Activated naive CD4-positive, alpha-beta T cell treated with anti-CD3 and anti-CD28 coated beads for 36 hours (primary cell): ENCODE measurements at regions of chr1 and their contacts with region 1.

Region 1: GRCh38 chr1:192516776-192517297 is 58.7 kb upstream of the RGS1 start:
- DNase-seq: peak; percentile 76
- H3K4me3 Mint-ChIP-seq: peak overlapping the region; percentile 66
- H3K27ac Mint-ChIP-seq: peak overlapping the region; percentile 79
- H3K4me1 Mint-ChIP-seq: peaks cover 53% of the 10 kb centered on the region
- H3K27me3 Mint-ChIP-seq: no peaks in the 10 kb centered on the region

Region 2: GRCh38 chr1:192407206-192407605 is 109.6 kb before region 1 on chr1:
- CTCF ChIA-PET with region 1: no interaction called
- intact Hi-C with region 1: no loop called
- DNase-seq: no peak
- H3K4me3 Mint-ChIP-seq: no peak overlapping the region
- H3K27ac Mint-ChIP-seq: no peak overlapping the region
- H3K4me1 Mint-ChIP-seq: no peaks in the 10 kb centered on the region
- H3K27me3 Mint-ChIP-seq: no peaks in the 10 kb centered on the region

Region 3: DNA sequence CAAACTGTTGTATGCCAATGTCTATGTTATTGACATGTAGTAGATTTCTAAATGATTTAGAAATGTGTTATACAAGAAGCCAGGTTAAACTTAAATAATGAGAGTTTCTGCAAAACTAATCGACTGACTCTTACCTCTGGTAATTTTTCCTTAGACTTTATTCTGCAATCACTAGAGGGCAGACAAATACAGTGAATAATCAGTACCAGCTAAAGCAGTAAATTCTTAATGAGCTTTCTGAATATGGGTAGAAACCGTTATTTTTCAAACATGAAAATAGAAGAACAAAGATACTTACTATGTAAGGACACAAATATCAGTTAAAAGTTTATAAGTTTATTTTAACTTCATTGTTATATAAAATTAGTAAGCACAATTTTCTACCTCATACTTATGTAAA is 39.2 kb before region 1 on chr1:
- CTCF ChIA-PET with region 1: interaction called, 4 read pairs
- intact Hi-C with region 1: loop called (anchors 5 kb)
- DNase-seq: no peak
- H3K4me3 Mint-ChIP-seq: no peak overlapping the region
- H3K27ac Mint-ChIP-seq: no peak overlapping the region
- H3K4me1 Mint-ChIP-seq: no peaks in the 10 kb centered on the region
- H3K27me3 Mint-ChIP-seq: no peaks in the 10 kb centered on the region

Region 4: DNA sequence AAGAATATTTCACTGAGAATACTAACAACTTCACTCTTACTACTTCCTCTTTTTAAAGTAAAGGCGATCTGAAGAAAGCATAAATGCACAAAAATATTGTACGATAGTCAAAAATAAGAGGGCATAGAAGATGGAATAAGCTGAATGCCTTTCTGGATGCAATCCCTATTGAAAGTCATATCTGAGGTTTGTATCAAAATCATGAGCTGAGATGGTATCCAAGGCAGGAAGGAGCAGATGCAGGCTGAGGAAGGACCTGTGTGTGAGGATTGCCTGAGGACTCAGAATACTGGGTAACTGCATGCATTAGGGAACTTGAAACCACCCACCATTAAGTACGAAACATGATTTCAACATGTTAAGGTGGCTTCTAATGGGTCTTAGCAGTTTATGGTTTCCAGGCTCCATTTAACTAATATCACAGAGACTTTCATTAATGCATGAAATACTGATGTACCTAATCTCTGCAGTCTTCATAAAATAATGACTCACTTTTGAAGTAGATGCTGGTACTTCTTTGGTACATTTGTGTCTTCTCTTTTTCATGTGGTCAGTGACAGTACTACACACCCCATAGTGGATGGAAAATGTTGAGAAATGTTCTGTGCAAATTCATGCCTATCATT is 29.2 kb after region 1 on chr1:
- CTCF ChIA-PET with region 1: no interaction called
- intact Hi-C with region 1: loop called (anchors 1 kb)
- DNase-seq: no peak
- H3K4me3 Mint-ChIP-seq: no peak overlapping the region
- H3K27ac Mint-ChIP-seq: no peak overlapping the region
- H3K4me1 Mint-ChIP-seq: peaks cover 33% of the 10 kb centered on the region
- H3K27me3 Mint-ChIP-seq: no peaks in the 10 kb centered on the region

Region 5: GRCh38 chr1:192601567-192601966 is 84.7 kb after region 1 on chr1:
- CTCF ChIA-PET with region 1: no interaction called
- intact Hi-C with region 1: loop called (anchors 1 kb)
- DNase-seq: no peak
- H3K4me3 Mint-ChIP-seq: no peak overlapping the region
- H3K27ac Mint-ChIP-seq: no peak overlapping the region
- H3K4me1 Mint-ChIP-seq: peaks cover 26% of the 10 kb centered on the region
- H3K27me3 Mint-ChIP-seq: no peaks in the 10 kb centered on the region

Region 6: DNA sequence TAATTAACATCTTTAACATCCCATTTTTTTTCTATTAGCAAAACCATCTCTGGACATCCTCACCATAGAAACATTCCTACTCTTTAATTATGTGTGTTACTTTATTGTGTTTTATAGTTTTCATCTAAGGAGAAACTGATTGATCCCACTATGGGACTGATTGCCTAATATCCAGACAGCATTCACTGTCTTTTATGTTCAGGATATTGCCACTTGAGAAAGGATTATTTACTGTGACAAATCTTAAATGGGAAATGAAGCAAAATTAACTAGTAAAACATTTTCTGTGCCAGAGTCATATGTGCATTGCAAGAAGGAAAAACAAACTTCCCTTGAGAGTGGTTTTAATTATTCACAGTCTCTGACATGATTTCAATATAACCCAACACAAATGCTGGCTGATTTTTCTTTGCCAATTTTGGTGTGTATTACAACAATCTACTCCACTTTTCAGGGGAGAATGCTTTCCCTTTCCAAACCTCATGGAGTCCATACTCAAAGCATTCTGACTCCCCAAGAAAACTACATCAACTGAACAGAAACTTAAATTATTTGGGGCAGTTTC is 103.3 kb after region 1 on chr1:
- CTCF ChIA-PET with region 1: no interaction called
- intact Hi-C with region 1: no loop called
- DNase-seq: no peak
- H3K4me3 Mint-ChIP-seq: no peak overlapping the region
- H3K27ac Mint-ChIP-seq: no peak overlapping the region
- H3K4me1 Mint-ChIP-seq: no peaks in the 10 kb centered on the region
- H3K27me3 Mint-ChIP-seq: peaks cover 22% of the 10 kb centered on the region

Region 7: DNA sequence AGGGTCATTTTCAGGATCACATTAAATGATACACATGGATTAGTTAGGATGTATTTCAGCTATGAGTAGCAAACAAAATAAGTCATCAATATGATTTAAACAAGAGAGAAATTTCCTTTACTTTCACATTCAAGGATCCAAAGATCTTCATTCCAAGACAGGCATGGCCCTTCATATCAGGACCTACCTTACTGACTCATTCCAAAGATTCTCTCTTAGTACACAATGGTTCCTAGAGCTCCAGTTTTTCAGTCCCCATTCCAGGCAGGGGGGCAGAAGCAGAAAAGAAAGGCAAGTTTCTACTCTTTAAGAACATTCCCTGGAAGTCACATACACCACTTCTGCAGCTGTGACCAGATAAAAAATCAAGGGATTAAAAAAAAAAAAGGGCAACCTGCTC is 315.7 kb after region 1 on chr1:
- CTCF ChIA-PET with region 1: no interaction called
- intact Hi-C with region 1: no loop called
- DNase-seq: no peak
- H3K4me3 Mint-ChIP-seq: no peak overlapping the region
- H3K27ac Mint-ChIP-seq: no peak overlapping the region
- H3K4me1 Mint-ChIP-seq: no peaks in the 10 kb centered on the region
- H3K27me3 Mint-ChIP-seq: peaks cover 4% of the 10 kb centered on the region

Region 8: DNA sequence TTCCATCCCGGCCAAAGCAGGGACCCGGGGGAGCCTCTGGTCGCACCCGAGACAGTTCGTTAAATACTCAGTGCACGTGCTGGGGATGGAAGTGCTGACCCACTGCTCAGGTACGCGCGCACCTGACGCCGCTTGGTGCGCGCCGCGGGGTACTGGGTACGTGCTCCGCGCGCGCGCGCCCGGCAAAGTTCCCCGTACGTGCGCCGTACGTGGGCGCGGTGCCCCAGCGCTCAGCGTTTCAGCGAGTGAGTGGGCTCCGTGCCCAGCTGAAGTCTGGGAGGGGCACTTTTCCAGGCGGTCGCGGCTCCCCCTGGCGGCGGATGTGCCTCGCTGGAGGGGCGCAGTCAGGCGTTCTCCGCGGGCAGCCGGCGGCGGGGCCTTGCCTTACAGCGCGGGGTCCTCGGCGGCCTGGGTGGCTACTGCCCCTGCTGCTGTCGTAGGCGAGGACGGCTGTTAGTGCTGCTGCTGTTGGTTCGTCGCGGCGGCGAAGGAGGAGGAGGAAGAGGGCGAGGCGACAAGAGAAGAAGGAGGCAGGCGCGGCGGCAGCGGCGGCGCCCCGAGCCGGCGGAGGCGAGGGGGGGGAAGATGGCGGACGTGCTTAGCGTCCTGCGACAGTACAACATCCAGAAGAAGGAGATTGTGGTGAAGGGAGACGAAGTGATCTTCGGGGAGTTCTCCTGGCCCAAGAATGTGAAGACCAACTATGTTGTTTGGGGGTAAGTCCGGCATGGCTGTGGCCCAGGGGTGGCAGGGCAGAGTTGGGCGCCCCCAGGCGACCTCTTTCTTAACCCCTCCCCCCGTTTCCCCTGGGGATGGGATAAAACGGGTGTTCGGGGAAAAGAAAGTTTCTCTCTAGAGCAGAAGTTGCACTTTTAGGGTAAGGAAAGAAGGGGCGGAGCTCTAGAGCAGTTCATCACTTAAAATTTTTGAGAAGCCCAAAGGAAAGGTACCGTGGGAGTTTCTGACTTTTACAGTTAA is 605.1 kb after region 1 on chr1 and contains the start of gene CDC73:
- CTCF ChIA-PET with region 1: no interaction called
- intact Hi-C with region 1: loop called (anchors 5 kb)
- DNase-seq: peak; percentile 97
- H3K4me3 Mint-ChIP-seq: peak within 1 kb of the TSS; percentile 92
- H3K27ac Mint-ChIP-seq: peak within 1 kb of the TSS; percentile 92
- H3K4me1 Mint-ChIP-seq: peaks cover 43% of the 10 kb centered on the region
- H3K27me3 Mint-ChIP-seq: peaks cover 1% of the 10 kb centered on the region
- total RNA-seq, gene CDC73: 39.0 to 45.2 TPM

Region 9: GRCh38 chr1:194289569-194290266 is 1772.9 kb after region 1 on chr1:
- CTCF ChIA-PET with region 1: no interaction called
- intact Hi-C with region 1: loop called (anchors 5 kb)
- DNase-seq: peak; percentile 81
- H3K4me3 Mint-ChIP-seq: peak overlapping the region; percentile 54
- H3K27ac Mint-ChIP-seq: peak overlapping the region; percentile 59
- H3K4me1 Mint-ChIP-seq: peaks cover 25% of the 10 kb centered on the region
- H3K27me3 Mint-ChIP-seq: no peaks in the 10 kb centered on the region